ENCODE measurements at regions of chr10 and their contacts with region 1.

Region 1: DNA sequence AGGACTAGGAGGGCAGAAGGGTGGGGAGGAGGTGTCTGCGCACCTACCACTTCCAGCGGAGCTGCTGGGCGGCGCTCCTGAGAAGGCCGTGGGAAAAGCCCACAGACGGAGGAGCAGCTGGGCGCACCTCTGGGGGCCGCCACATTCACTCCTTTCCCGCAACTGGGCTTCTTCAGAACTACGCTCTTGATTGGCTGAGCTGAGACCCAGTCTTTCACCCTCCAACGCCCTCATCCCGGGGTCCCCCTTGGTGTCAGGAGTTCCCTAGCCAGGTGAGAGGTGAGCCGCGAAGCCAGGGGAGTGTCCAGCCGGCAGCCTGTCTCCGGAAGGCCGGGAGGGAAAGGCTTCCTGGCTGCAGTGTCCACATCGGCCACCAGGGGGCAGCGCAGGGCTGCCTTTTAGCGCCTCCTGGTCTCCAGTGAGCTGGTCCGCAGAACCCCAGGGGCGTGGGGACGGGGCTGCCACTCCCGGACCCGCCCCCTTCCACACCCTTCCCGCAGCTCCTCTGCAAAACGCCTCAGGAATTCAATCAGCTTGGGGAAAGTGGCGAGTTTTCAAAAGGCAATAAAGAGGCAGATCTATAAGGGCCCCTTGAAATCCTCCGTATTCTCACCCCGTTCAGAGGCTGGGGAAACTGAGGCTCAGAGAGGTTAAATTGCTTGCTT is 98.8 kb downstream of the CHST15 start:
- DNase-seq: peak; percentile 56 to 91 (median 77)
- ATAC-seq: peak; percentile 90
- H3K4me3 ChIP-seq: peak overlapping the region; percentile 10 to 39
- H3K4me3 Mint-ChIP-seq: peak overlapping the region; percentile 29
- H3K27ac ChIP-seq: no peak overlapping the region
- H3K27ac Mint-ChIP-seq: no peak overlapping the region
- H3K4me1 ChIP-seq: peaks cover 10% of the 10 kb centered on the region
- H3K4me1 Mint-ChIP-seq: peaks cover 25% of the 10 kb centered on the region
- H3K27me3 ChIP-seq: peaks cover 12 to 18% of the 10 kb centered on the region in 2 experiments
- H3K27me3 Mint-ChIP-seq: peaks cover 48% of the 10 kb centered on the region
- CTCF ChIP-seq: peak; percentile 95

Region 2: DNA sequence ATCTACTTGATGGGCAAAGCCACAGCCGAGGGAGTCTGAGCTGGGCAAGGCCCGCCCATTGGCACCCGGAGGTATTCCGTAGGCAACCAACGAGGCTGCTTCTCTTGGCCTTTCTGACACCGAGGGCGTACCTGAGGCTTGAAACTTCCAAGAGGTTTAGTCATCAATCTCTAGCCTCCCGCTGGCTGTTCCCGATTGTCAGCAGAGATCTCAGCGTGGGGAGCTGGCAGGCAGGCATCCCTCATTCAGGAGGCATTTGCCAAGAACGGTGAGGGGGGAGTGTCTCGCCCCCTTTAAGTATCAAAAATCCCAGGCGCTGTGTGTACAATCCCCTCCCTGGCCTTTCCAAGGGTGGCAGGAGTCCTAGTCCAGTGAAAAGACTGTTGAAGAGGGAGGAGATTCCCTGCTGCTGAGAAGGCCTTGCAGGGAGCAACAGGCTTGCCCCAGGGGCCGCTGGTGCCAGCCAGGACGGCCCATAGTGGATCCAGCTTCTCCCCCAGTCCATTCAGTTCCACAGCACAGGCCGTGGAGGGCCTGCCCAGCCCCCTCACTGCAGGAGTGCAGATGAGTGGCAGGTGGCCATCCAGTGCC is 384.4 kb after region 1 on chr10:
- CTCF ChIA-PET with region 1: interaction called, 13 read pairs
- POLR2A ChIA-PET with region 1: no interaction called
- intact Hi-C with region 1: no loop called
- DNase-seq: no peak
- ATAC-seq: no peak
- H3K4me3 ChIP-seq: no peak overlapping the region
- H3K4me3 Mint-ChIP-seq: no peak overlapping the region
- H3K27ac ChIP-seq: no peak overlapping the region
- H3K27ac Mint-ChIP-seq: no peak overlapping the region
- H3K4me1 ChIP-seq: no peaks in the 10 kb centered on the region
- H3K4me1 Mint-ChIP-seq: no peaks in the 10 kb centered on the region
- H3K27me3 ChIP-seq: peaks cover 3 to 8% of the 10 kb centered on the region in 2 experiments
- H3K27me3 Mint-ChIP-seq: peaks cover 43% of the 10 kb centered on the region
- CTCF ChIP-seq: no peak

Region 3: DNA sequence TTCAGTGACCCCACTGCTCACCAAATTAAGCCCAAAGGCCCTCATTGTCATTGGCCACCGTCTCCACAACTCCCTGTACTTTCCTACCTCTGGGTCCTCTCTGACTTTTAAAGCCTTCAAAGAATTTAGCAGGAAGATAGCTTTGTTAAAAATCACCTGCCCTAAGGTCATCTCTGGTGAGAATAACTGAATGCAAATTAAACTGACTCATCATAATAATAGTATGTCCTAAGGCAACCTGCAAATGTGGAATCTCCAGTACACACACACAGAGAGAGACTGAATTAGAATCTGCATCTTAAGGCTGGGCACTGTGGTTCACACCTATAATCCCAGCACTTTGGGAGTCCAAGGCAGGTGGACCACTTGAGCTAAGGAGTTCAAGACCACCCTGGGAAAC is 400.0 kb after region 1 on chr10:
- CTCF ChIA-PET with region 1: interaction called, 198 read pairs
- POLR2A ChIA-PET with region 1: interaction called, 10 read pairs
- intact Hi-C with region 1: loop called in 1 of 2 experiments (anchors 1 kb)
- DNase-seq: no peak
- ATAC-seq: no peak
- H3K4me3 ChIP-seq: no peak overlapping the region
- H3K4me3 Mint-ChIP-seq: no peak overlapping the region
- H3K27ac ChIP-seq: no peak overlapping the region
- H3K27ac Mint-ChIP-seq: no peak overlapping the region
- H3K4me1 ChIP-seq: peaks cover under 1% of the 10 kb centered on the region
- H3K4me1 Mint-ChIP-seq: no peaks in the 10 kb centered on the region
- H3K27me3 ChIP-seq: no peaks in the 10 kb centered on the region
- H3K27me3 Mint-ChIP-seq: no peaks in the 10 kb centered on the region
- CTCF ChIP-seq: no peak

Region 4: GRCh38 chr10:124403548-124403947 is 409.0 kb after region 1 on chr10:
- CTCF ChIA-PET with region 1: interaction called, 14 read pairs
- POLR2A ChIA-PET with region 1: interaction called, 3 read pairs
- intact Hi-C with region 1: loop called in 1 of 2 experiments (anchors 1 kb)
- DNase-seq: peak in 4 of 9 experiments; percentile 17 to 82 (median 55)
- ATAC-seq: peak; percentile 99
- H3K4me3 ChIP-seq: no peak overlapping the region
- H3K4me3 Mint-ChIP-seq: no peak overlapping the region
- H3K27ac ChIP-seq: peak overlapping the region in 1 of 2 experiments; percentile 38
- H3K27ac Mint-ChIP-seq: peak overlapping the region; percentile 46
- H3K4me1 ChIP-seq: no peaks in the 10 kb centered on the region
- H3K4me1 Mint-ChIP-seq: peaks cover 10% of the 10 kb centered on the region
- H3K27me3 ChIP-seq: no peaks in the 10 kb centered on the region
- H3K27me3 Mint-ChIP-seq: no peaks in the 10 kb centered on the region
- CTCF ChIP-seq: peak; percentile 56

Measured in CD8-positive, alpha-beta T cell (primary cell).